Uterus (tissue), 4 donors: ENCODE measurements at regions of chr4 and their contacts with region 1.

Region 1: DNA sequence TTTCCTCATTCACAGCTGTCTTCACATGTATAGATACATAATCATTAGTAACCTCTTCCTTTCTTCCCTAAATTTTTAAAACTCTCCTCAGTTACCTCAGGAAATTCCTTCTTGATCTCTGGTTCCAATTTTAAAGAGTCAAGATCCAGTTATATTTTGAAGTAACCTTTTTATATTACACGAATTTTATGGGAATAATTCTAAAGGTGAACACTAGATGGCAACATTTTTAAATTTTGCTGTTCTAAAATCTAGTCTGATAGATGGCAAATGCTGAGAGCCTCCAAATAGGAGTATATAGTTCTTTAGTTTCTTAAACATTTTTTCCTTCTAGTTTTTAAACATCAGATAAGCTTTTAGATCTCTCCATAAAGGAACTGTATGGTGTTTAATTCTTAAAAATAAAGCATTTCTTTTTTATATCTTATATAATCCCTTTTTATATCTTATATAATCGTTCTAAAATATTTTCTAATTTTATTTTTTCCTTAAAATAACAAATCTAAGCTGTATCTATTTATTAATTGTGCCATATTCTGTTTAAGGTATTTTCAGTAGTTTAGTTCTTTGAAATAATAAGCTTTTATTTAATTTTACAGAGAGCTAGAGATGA is 37.9 kb upstream of the PAPSS1 start:
- DNase-seq: no peak
- H3K4me3 ChIP-seq: no peak overlapping the region
- H3K27ac ChIP-seq: no peak overlapping the region
- H3K4me1 ChIP-seq: no peaks in the 10 kb centered on the region
- H3K27me3 ChIP-seq: no peaks in the 10 kb centered on the region
- CTCF ChIP-seq: peak; percentile 47 to 63 (median 57)
- POLR2A ChIP-seq: no peak

Region 2: GRCh38 chr4:107838861-107839565 is 81.0 kb after region 1 on chr4:
- intact Hi-C with region 1: no loop called
- DNase-seq: no peak
- H3K4me3 ChIP-seq: no peak overlapping the region
- H3K27ac ChIP-seq: no peak overlapping the region
- H3K4me1 ChIP-seq: no peaks in the 10 kb centered on the region
- H3K27me3 ChIP-seq: no peaks in the 10 kb centered on the region
- CTCF ChIP-seq: no peak
- POLR2A ChIP-seq: no peak

Region 3: DNA sequence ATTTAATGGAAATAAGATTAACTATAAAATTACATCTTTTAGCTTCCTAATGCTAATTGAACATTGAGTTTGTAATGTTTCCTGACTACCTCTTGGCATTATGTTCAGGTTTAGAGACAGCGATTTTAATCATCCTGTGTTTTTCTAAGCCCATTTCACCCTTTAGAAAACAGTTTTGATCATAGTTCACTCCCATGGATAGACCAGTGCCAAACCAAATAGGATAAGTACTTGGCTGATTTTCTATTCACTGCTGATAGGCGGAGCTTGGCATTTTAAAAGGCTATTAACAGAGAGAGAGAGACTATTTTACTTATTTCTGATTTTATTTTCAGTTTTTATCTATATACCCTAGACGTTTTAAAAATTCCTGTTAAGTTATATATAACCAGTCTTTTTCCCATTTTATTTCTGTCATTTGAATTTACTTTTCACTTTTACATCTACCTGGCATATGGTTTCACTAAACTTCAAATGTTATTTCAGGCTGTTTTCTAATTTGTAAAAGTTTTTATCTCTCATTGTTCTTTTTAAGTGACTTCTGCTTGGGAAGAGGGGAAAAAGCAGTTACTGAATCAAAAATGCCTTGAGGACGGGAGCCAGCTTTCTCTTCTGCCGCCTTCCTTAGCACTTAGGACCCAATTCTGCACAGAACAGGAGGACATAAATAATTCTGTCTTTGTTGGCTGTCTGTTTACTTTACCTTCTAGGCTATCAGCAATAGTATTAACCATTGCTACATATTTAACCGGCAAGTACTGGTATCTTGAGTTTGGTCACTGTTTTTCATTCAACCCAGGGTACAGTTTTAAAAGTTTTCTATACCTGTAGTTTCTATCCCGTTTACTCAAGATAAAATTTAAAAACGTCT is 113.2 kb after region 1 on chr4:
- intact Hi-C with region 1: no loop called
- DNase-seq: no peak
- H3K4me3 ChIP-seq: peak overlapping the region in 1 of 2 donors; percentile 8
- H3K27ac ChIP-seq: peak overlapping the region; percentile 13
- H3K4me1 ChIP-seq: peaks cover 0 to 3% of the 10 kb centered on the region in 2 donors
- H3K27me3 ChIP-seq: no peaks in the 10 kb centered on the region
- CTCF ChIP-seq: no peak
- POLR2A ChIP-seq: no peak

Region 4: GRCh38 chr4:107902715-107903114 is 144.7 kb after region 1 on chr4:
- intact Hi-C with region 1: loop called (anchors 5 kb)
- DNase-seq: no peak
- H3K4me3 ChIP-seq: no peak overlapping the region
- H3K27ac ChIP-seq: peak overlapping the region in 1 of 2 donors; percentile 54
- H3K4me1 ChIP-seq: peaks cover 0 to 10% of the 10 kb centered on the region in 2 donors
- H3K27me3 ChIP-seq: no peaks in the 10 kb centered on the region
- CTCF ChIP-seq: no peak
- POLR2A ChIP-seq: no peak

Region 5: GRCh38 chr4:107913281-107913899 is 155.4 kb after region 1 on chr4:
- intact Hi-C with region 1: loop called (anchors 5 kb)
- DNase-seq: peak; percentile 22 to 53
- H3K4me3 ChIP-seq: no peak overlapping the region
- H3K27ac ChIP-seq: no peak overlapping the region
- H3K4me1 ChIP-seq: no peaks in the 10 kb centered on the region
- H3K27me3 ChIP-seq: no peaks in the 10 kb centered on the region
- CTCF ChIP-seq: peak; percentile 76 to 86 (median 82)
- POLR2A ChIP-seq: no peak